GM12878 (cell line): ENCODE measurements at regions of chr7 and their contacts with region 1.

Region 1: DNA sequence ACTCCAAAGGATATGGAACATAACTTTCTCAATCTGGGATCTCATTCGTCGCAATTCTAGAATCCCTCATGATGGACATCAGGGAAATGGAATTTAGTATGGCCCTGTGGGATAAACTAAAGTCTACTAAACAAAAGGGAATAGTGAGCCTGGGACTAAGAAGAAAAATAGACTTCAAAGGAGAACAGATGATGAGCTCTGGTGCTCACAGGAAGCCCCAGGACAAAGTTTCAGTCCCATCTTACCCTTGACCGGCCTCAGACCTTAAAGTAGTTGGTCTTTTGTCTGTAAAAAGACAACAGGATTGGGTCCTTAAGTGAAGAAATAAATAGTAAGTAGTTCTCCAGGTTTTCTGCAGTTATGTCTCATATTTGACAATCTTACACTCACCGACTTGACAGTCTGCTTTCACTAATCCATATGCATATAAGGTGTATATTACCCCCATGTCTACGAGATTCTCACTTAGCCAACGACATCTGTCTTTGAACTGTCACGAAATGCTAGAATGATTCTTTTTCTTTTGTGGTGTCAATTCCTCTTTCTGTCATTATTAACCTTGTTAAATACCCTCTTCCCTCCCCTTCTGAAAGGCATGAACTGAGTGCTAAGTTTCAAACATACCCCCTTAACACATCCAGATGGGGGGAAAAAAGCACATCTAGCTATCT is 10.9 kb upstream of the IKZF1 start:
- DNase-seq: no peak
- ATAC-seq: peak; percentile 77
- H3K4me3 ChIP-seq: 0 out of 2 replicates have a peak overlapping the region, but pooled peaks have one; percentile 3
- H3K27ac ChIP-seq: peak overlapping the region; percentile 36
- H3K4me1 ChIP-seq: peaks cover 22% of the 10 kb centered on the region
- H3K27me3 ChIP-seq: no peaks in the 10 kb centered on the region
- CTCF ChIP-seq: no peak
- EP300 ChIP-seq: peak in 1 of 2 experiments; percentile 67; a peak in 1 of 4 replicates
- POLR2A ChIP-seq: no peak
- RAD21 ChIP-seq: no peak

Region 2: GRCh38 chr7:50281680-50282445 is 11.8 kb before region 1 on chr7:
- CTCF ChIA-PET with region 1: interaction called, 37 read pairs
- POLR2A ChIA-PET with region 1: interaction called, 54 read pairs
- RAD21 ChIA-PET with region 1: interaction called, 54 read pairs
- SMC1A ChIA-PET with region 1: interaction called, 274 read pairs
- in situ Hi-C with region 1: no loop called
- intact Hi-C with region 1: no loop called
- DNase-seq: peak; percentile 81
- ATAC-seq: peak; percentile 88
- H3K4me3 ChIP-seq: peak overlapping the region; percentile 69
- H3K27ac ChIP-seq: peak overlapping the region; percentile 82
- H3K4me1 ChIP-seq: peaks cover 49% of the 10 kb centered on the region
- H3K27me3 ChIP-seq: no peaks in the 10 kb centered on the region
- CTCF ChIP-seq: no peak
- EP300 ChIP-seq: peak; percentile 35 to 72; a peak in 1 of 4 replicates
- POLR2A ChIP-seq: peak; percentile 54; the same call in 1 of the 2 replicates
- RAD21 ChIP-seq: peak; percentile 29; the same call in 1 of the 2 replicates

Region 3: GRCh38 chr7:51246258-51247245 is 952.9 kb after region 1 on chr7:
- CTCF ChIA-PET with region 1: no interaction called
- POLR2A ChIA-PET with region 1: no interaction called
- RAD21 ChIA-PET with region 1: no interaction called
- SMC1A ChIA-PET with region 1: no interaction called
- in situ Hi-C with region 1: no loop called
- intact Hi-C with region 1: no loop called
- DNase-seq: no peak
- ATAC-seq: no peak
- H3K4me3 ChIP-seq: no peak overlapping the region
- H3K27ac ChIP-seq: no peak overlapping the region
- H3K4me1 ChIP-seq: no peaks in the 10 kb centered on the region
- H3K27me3 ChIP-seq: no peaks in the 10 kb centered on the region
- CTCF ChIP-seq: no peak
- EP300 ChIP-seq: no peak
- POLR2A ChIP-seq: no peak
- RAD21 ChIP-seq: no peak